ENCODE measurements at regions of chr1 and their contacts with region 1.

Region 1: DNA sequence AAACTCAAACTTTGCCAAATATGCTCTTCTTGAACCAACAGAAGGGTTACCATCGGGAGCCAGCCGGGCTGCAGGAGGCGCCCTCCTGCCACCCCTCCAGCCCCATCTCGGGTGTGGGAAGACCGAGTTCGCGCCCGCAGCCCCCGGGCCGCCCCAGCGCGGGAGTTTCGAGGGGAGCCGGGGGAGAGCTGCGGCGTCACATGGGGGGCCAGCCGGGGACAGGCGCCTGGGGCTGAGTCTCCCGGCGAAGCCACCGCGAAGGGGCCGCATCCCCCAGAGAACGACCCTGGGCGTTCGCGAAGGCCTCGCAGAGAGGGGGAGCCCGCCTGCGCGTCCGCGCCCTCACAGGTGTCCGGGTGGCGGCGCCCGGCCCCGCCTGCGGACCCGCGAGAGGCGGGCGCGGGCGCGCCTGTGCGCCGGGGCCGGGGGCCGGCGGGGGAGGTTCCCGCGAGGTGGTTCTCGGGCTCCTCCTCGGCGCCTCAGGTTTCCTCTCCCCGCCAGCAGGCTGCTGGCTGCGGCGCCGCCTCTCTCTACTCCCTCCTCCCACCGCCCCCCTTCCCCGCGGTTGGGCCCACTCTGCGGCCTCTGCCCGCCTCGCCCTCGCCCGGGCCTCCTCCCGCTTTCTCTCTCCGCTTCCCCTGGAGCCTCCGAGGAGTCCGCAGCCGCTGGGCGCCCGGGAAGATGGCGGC is at the start of gene RAVER2:
- DNase-seq: peak; percentile 53 to 75 (median 62)
- H3K4me3 ChIP-seq: peak within 1 kb of the TSS; percentile 17 to 54
- H3K4me3 Mint-ChIP-seq: peak within 1 kb of the TSS; percentile 87 to 94 (median 92)
- H3K27ac ChIP-seq: peak within 1 kb of the TSS; percentile 43
- H3K27ac Mint-ChIP-seq: peak within 1 kb of the TSS; percentile 77 to 90 (median 82)
- H3K4me1 ChIP-seq: peaks cover 13% of the 10 kb centered on the region
- H3K4me1 Mint-ChIP-seq: peaks cover 9 to 30% (median 22%) of the 10 kb centered on the region in 4 donors
- H3K27me3 ChIP-seq: peaks cover 3% of the 10 kb centered on the region
- H3K27me3 Mint-ChIP-seq: peaks cover 2 to 3% of the 10 kb centered on the region in 2 donors
- total RNA-seq, gene RAVER2: 1.7 to 2.1 TPM

Region 2: DNA sequence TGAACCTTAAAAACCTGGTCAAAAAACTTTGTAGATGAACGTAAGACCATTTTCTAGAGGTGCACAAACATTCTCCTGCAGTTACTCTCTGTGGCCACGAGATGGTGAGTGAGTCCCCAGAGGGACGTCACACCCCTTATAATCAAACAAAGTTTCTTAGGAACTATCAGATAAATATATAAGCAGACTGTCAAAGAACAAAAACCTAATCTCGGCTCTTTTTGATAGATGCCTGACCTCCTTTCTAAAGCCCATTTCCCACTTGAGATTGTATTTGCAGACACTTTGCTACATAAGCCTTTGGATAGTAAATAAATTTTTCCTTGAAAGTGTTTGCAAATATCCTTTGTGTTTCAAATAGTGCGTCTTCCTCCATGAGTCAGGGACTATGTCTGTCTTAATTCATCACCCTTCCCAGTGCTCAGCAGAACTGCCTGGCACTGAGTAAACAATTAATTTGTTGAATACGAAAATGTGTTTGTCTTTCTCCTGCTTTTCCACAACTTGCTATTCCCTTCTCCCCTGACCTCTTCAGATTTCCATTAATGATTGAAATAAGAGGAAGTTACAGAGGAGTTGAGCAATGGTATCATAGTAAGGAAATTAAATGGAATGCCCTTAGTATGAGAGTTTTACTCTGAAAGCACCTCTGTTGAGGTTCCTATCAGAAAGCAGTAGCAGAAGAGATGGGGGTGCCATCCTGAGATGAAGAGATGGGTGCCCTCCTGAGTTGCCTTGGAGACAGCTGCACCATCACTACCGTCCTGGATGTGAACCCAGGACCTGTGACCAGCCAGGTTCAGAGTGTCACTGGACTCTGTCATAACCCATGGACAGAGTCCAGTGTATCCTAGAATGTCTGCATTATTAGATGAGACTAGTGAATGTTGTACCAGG is 57.6 kb before region 1 on chr1:
- CTCF ChIA-PET with region 1: interaction called, 4 read pairs
- POLR2A ChIA-PET with region 1: no interaction called
- intact Hi-C with region 1: loop called (anchors 5 kb)
- DNase-seq: peak; percentile 38 to 47 (median 40)
- H3K4me3 ChIP-seq: no peak overlapping the region
- H3K4me3 Mint-ChIP-seq: no peak overlapping the region
- H3K27ac ChIP-seq: no peak overlapping the region
- H3K27ac Mint-ChIP-seq: no peak overlapping the region
- H3K4me1 ChIP-seq: no peaks in the 10 kb centered on the region
- H3K4me1 Mint-ChIP-seq: no peaks in the 10 kb centered on the region
- H3K27me3 ChIP-seq: no peaks in the 10 kb centered on the region
- H3K27me3 Mint-ChIP-seq: peaks cover 0 to 5% of the 10 kb centered on the region in 2 donors

Region 3: GRCh38 chr1:65209005-65209885 is 464.6 kb after region 1 on chr1:
- CTCF ChIA-PET with region 1: no interaction called
- POLR2A ChIA-PET with region 1: no interaction called
- intact Hi-C with region 1: loop called (anchors 5 kb)
- DNase-seq: peak in 3 of 5 donors; percentile 6 to 11 (median 7)
- H3K4me3 ChIP-seq: no peak overlapping the region
- H3K4me3 Mint-ChIP-seq: no peak overlapping the region
- H3K27ac ChIP-seq: no peak overlapping the region
- H3K27ac Mint-ChIP-seq: no peak overlapping the region
- H3K4me1 ChIP-seq: no peaks in the 10 kb centered on the region
- H3K4me1 Mint-ChIP-seq: peaks cover 0 to 3% (median 0%) of the 10 kb centered on the region in 4 donors
- H3K27me3 ChIP-seq: no peaks in the 10 kb centered on the region
- H3K27me3 Mint-ChIP-seq: peaks cover 0 to 6% of the 10 kb centered on the region in 2 donors

Region 4: GRCh38 chr1:65449214-65449842 is 704.7 kb after region 1 on chr1:
- CTCF ChIA-PET with region 1: no interaction called
- POLR2A ChIA-PET with region 1: no interaction called
- intact Hi-C with region 1: no loop called
- DNase-seq: no peak
- H3K4me3 ChIP-seq: no peak overlapping the region
- H3K4me3 Mint-ChIP-seq: no peak overlapping the region
- H3K27ac ChIP-seq: no peak overlapping the region
- H3K27ac Mint-ChIP-seq: no peak overlapping the region
- H3K4me1 ChIP-seq: no peaks in the 10 kb centered on the region
- H3K4me1 Mint-ChIP-seq: no peaks in the 10 kb centered on the region
- H3K27me3 ChIP-seq: no peaks in the 10 kb centered on the region
- H3K27me3 Mint-ChIP-seq: no peaks in the 10 kb centered on the region